ENCODE measurements at regions of chr20 and their contacts with region 1.

Region 1: GRCh38 chr20:16240355-16240754 is 332.9 kb downstream of the KIF16B start:
- DNase-seq: no peak
- H3K4me3 ChIP-seq: no peak overlapping the region
- H3K27ac ChIP-seq: no peak overlapping the region
- H3K4me1 ChIP-seq: no peaks in the 10 kb centered on the region
- H3K27me3 ChIP-seq: no peaks in the 10 kb centered on the region
- CTCF ChIP-seq: no peak
- EP300 ChIP-seq: no peak
- POLR2A ChIP-seq: no peak

Region 2: GRCh38 chr20:16265334-16265733 is 25.0 kb after region 1 on chr20:
- in situ Hi-C with region 1: no loop called
- intact Hi-C with region 1: loop called (anchors 1 kb)
- DNase-seq: no peak
- H3K4me3 ChIP-seq: no peak overlapping the region
- H3K27ac ChIP-seq: no peak overlapping the region
- H3K4me1 ChIP-seq: no peaks in the 10 kb centered on the region
- H3K27me3 ChIP-seq: no peaks in the 10 kb centered on the region
- CTCF ChIP-seq: no peak
- EP300 ChIP-seq: no peak
- POLR2A ChIP-seq: no peak

Measured in transverse colon (tissue), 4 donors.